ENCODE measurements at regions of chr2 and their contacts with region 1.

Region 1: DNA sequence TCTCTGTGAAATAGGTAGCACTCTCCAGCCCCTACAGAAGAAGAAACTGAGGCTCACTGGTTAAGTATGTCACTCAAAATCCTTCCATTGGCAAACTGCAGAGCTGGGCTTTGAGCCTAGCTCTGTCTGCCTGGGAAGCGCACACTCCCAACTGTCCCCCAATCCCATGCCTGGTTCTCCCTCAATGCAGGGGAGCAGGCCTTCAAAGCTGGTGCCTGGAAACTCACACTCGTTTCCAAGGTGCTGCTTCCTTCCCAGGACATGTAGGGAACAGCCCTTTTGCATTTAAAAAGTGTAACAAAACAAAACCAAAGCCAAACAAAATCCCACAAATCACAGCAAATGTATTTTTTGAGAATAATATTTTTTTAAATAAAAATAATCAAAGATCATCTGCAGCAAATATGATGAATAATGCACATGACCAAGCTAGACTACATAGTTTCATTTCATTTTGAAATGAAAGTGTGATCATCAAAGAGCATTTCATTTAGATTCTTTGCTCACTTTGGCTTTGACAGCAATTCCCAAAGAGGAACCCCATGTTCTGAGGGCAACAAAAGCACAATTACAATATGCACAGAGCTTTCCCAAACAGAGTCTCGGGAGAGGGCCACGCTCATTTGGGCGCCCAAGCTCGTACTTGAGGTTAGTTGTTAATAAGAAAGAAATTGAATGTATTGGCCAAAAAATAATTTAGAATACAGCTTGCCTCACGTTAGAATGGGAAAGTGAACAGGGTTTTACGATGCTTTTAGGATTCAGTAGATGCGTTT is 96.7 kb upstream of the ACKR3 start:
- DNase-seq: no peak
- H3K4me3 ChIP-seq: no peak overlapping the region
- H3K27ac ChIP-seq: no peak overlapping the region
- H3K4me1 ChIP-seq: no peaks in the 10 kb centered on the region
- H3K27me3 ChIP-seq: no peaks in the 10 kb centered on the region
- CTCF ChIP-seq: no peak

Region 2: DNA sequence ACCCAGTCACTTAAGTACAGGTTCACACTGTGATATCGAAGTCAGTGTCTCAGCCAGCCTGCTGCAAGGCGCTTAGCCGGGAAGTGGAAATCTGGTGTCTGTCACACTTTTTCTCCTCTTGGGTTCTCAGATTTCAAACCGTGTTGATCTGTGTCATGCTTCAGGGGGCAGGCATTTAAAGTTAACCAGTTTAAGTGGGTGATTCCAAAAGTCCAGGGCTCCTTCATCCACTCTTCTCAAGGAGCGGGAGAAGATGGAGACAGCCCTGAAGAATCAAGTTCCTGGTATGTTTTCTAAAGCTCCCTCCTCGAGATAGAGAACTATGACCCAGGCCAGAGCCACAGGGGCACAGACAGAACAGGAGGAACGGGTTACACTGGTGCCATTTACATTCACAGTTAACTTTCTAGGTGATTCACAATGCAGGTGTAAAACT is 636.4 kb before region 1 on chr2:
- CTCF ChIA-PET with region 1: no interaction called
- dilution Hi-C with region 1: no loop called
- in situ Hi-C with region 1: no loop called
- intact Hi-C with region 1: no loop called
- DNase-seq: no peak
- H3K4me3 ChIP-seq: no peak overlapping the region
- H3K27ac ChIP-seq: no peak overlapping the region
- H3K4me1 ChIP-seq: no peaks in the 10 kb centered on the region
- H3K27me3 ChIP-seq: no peaks in the 10 kb centered on the region
- CTCF ChIP-seq: no peak

Region 3: GRCh38 chr2:236369661-236370062 is 103.2 kb before region 1 on chr2:
- CTCF ChIA-PET with region 1: no interaction called
- dilution Hi-C with region 1: loop called (anchors 5 kb)
- in situ Hi-C with region 1: no loop called
- intact Hi-C with region 1: no loop called
- DNase-seq: no peak
- H3K4me3 ChIP-seq: no peak overlapping the region
- H3K27ac ChIP-seq: no peak overlapping the region
- H3K4me1 ChIP-seq: peaks cover 7% of the 10 kb centered on the region
- H3K27me3 ChIP-seq: no peaks in the 10 kb centered on the region
- CTCF ChIP-seq: no peak

Measured in mammary epithelial cell (primary cell).